ENCODE measurements at regions of chr4 and their contacts with region 1.

Region 1: DNA sequence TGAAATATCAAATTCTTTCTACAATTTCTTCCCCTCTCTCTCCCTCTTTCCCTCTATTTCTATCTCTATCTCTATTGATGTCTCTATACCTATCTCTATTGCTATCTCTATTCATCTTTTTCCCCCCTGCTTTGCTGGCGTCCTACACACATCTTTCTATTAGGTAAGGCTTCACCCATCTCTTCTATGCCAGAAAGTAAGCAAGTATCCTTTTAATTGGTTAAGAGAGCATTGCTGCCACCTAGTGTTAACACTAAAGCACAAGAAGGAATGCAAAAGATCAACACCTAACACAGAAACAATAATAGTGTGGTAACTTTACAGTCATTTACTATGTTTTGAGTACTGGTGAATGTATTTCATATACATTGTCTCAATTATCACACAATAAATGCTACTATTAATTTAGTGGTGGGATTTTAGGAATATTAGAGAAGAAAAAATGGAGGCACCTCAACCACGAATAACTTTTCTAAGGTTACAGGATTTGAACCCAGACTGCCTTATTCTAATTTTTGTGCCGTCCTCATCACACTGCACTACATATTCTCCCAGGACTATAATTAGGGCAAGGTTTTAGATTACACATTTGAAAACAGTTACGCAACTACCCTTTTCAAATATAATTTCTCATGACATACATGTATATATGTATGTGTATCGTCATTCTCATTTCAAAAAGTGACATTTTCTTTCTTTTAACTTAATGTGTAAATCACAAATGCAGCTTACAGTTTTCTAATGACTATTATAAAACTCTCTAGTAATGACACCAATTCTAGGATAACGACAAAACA is 3.7 kb upstream of the C4orf36 start:
- DNase-seq: peak; percentile 37
- H3K4me3 Mint-ChIP-seq: no peak overlapping the region
- H3K27ac Mint-ChIP-seq: no peak overlapping the region
- H3K4me1 Mint-ChIP-seq: no peaks in the 10 kb centered on the region
- H3K27me3 Mint-ChIP-seq: no peaks in the 10 kb centered on the region
- CTCF ChIP-seq: no peak

Region 2: DNA sequence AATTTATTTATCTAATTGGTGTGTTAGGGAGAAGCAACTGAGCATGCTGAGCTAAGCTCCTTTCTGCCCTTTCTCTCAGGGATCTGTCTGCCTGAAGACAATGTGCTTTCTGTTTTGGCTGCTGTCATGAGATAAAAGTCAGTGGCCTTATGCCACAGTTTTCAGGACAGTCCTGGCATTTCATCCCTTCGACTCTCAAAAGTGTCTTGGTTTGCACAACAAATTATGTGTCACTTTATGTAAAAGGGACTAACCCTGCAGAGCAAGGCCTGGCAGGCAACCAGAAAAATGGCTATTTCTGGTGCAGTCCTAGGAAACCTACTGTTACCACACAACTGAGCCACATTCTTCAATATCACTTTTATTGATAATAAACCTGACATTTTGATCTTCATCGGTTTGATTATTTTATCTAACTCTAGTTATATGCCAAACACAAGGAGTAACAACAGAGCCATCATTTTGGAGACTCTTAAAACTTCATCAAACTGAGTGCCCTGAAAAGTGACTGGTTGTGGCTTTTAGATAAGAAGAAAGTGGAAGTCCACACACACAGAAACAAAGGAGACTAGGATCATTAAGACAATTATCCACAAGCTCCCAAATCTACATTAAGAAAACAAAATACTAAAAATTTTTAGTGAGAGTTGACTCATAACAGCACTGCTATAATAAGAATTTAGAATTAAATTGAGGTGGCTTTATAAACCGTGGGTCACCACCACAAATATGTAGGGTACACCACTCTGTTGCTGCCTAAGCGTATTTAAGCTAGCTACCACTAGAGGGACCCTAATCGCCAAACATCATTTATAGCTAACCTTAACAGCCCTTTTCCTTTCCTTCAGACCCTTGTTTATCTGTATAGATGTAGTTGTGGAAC is 397.7 kb before region 1 on chr4:
- CTCF ChIA-PET with region 1: interaction called, 4 read pairs
- intact Hi-C with region 1: loop called (anchors 1 kb)
- DNase-seq: peak; percentile 8
- H3K4me3 Mint-ChIP-seq: no peak overlapping the region
- H3K27ac Mint-ChIP-seq: no peak overlapping the region
- H3K4me1 Mint-ChIP-seq: peaks cover 18% of the 10 kb centered on the region
- H3K27me3 Mint-ChIP-seq: no peaks in the 10 kb centered on the region
- CTCF ChIP-seq: peak; percentile 61

Region 3: DNA sequence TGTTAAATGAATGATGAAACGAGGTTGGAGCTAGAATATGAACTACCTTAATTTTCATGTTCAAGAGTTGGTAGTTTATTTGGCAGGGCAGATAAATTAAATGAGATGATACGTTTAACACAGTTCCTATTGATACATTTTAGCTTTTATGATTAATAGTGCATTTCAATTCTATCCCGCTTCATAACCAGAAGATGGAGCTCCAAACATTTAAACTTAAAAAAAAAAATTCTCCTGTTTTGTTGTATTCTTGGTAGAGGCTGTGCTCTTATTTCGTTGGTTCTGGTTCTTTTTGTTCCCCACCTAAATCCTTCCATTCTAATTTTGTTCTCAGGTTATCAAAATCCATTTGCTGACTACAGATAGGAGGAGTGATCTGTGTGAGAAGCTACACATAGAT is 373.5 kb before region 1 on chr4:
- CTCF ChIA-PET with region 1: no interaction called
- intact Hi-C with region 1: loop called (anchors 1 kb)
- DNase-seq: no peak
- H3K4me3 Mint-ChIP-seq: no peak overlapping the region
- H3K27ac Mint-ChIP-seq: no peak overlapping the region
- H3K4me1 Mint-ChIP-seq: no peaks in the 10 kb centered on the region
- H3K27me3 Mint-ChIP-seq: no peaks in the 10 kb centered on the region
- CTCF ChIP-seq: no peak

Region 4: GRCh38 chr4:86594559-86595425 is 301.1 kb before region 1 on chr4:
- CTCF ChIA-PET with region 1: no interaction called
- intact Hi-C with region 1: loop called (anchors 5 kb)
- DNase-seq: peak; percentile 31
- H3K4me3 Mint-ChIP-seq: peak overlapping the region; percentile 85
- H3K27ac Mint-ChIP-seq: peak overlapping the region; percentile 69
- H3K4me1 Mint-ChIP-seq: peaks cover 18% of the 10 kb centered on the region
- H3K27me3 Mint-ChIP-seq: no peaks in the 10 kb centered on the region
- CTCF ChIP-seq: no peak

Region 5: DNA sequence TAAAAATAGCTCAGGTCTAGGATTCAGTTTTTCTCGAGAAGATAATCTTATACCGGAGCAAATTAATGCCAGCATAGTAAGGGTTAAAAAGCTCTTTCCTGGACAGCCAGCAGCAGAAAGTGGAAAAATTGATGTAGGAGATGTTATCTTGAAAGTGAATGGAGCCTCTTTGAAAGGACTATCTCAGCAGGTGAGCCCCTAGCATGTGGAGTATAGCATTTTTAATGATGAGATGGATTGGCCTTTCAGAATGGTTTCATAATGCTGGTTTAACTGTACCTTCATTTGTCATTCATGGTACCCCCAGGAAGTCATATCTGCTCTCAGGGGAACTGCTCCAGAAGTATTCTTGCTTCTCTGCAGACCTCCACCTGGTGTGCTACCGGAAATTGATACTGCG is 126.1 kb before region 1 on chr4:
- CTCF ChIA-PET with region 1: no interaction called
- intact Hi-C with region 1: loop called (anchors 10 kb)
- DNase-seq: no peak
- H3K4me3 Mint-ChIP-seq: no peak overlapping the region
- H3K27ac Mint-ChIP-seq: no peak overlapping the region
- H3K4me1 Mint-ChIP-seq: no peaks in the 10 kb centered on the region
- H3K27me3 Mint-ChIP-seq: no peaks in the 10 kb centered on the region
- CTCF ChIP-seq: no peak

Region 6: GRCh38 chr4:86831262-86832130 is 64.4 kb before region 1 on chr4:
- CTCF ChIA-PET with region 1: no interaction called
- intact Hi-C with region 1: loop called (anchors 10 kb)
- DNase-seq: peak; percentile 60
- H3K4me3 Mint-ChIP-seq: peak overlapping the region; percentile 39
- H3K27ac Mint-ChIP-seq: peak overlapping the region; percentile 83
- H3K4me1 Mint-ChIP-seq: peaks cover 24% of the 10 kb centered on the region
- H3K27me3 Mint-ChIP-seq: no peaks in the 10 kb centered on the region
- CTCF ChIP-seq: no peak

Region 7: DNA sequence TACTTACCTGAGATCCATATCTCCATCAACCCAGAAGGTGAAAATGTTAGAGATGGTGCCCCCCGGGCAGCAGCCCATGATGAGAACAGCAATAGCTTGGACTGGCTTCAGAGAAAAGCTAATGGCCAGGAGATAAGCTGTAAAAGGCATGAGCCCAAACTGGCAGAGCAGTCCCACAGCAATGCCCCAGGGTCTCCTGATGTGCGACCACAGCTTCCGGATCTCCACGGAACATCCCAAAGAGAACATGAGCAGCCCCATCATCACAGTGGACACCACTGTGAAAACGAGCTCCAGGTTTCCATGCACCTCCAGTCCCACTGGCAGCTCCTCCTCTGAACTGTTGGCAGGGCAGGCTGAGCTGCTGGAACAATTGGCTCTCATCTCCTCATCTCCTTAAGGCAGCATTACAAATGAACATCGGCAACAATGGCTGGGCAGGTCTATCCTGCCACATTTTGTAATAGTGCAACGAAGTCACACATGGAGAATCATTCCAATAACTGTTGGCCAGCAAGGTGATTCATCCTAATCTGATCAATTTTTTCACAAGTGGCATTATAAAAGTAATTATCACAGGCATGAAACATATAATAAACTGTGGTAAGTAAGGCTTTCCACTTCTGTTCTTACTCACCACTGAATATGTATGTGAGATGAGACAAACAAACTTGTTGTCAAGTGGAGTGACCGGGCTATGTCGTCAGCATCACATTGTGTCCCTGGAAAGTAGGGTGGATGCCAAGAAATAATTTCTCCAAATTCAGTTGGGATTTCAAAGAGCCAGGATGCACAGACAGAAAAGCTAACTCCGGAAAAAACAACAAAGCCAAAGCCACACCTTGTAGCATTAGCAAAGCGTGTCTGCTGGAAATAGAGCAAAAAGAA is 46.9 kb before region 1 on chr4 and contains the start of gene SLC10A6:
- CTCF ChIA-PET with region 1: no interaction called
- intact Hi-C with region 1: no loop called
- DNase-seq: no peak
- H3K4me3 Mint-ChIP-seq: no peak within 1 kb of the TSS
- H3K27ac Mint-ChIP-seq: no peak within 1 kb of the TSS
- H3K4me1 Mint-ChIP-seq: peaks cover 9% of the 10 kb centered on the region
- H3K27me3 Mint-ChIP-seq: no peaks in the 10 kb centered on the region
- CTCF ChIP-seq: no peak
- total RNA-seq, gene SLC10A6: not detected in 2 replicates

Region 8: GRCh38 chr4:87235020-87235671 is 339.3 kb after region 1 on chr4:
- CTCF ChIA-PET with region 1: no interaction called
- intact Hi-C with region 1: loop called (anchors 5 kb)
- DNase-seq: no peak
- H3K4me3 Mint-ChIP-seq: peak overlapping the region; percentile 66
- H3K27ac Mint-ChIP-seq: no peak overlapping the region
- H3K4me1 Mint-ChIP-seq: peaks cover 7% of the 10 kb centered on the region
- H3K27me3 Mint-ChIP-seq: no peaks in the 10 kb centered on the region
- CTCF ChIP-seq: no peak